ENCODE measurements at regions of chr6 and their contacts with region 1.

Region 1: GRCh38 chr6:31827286-31828079 is at the start of gene HSPA1B:
- DNase-seq: peak; percentile 92
- CTCF ChIP-seq: no peak

Region 2: DNA sequence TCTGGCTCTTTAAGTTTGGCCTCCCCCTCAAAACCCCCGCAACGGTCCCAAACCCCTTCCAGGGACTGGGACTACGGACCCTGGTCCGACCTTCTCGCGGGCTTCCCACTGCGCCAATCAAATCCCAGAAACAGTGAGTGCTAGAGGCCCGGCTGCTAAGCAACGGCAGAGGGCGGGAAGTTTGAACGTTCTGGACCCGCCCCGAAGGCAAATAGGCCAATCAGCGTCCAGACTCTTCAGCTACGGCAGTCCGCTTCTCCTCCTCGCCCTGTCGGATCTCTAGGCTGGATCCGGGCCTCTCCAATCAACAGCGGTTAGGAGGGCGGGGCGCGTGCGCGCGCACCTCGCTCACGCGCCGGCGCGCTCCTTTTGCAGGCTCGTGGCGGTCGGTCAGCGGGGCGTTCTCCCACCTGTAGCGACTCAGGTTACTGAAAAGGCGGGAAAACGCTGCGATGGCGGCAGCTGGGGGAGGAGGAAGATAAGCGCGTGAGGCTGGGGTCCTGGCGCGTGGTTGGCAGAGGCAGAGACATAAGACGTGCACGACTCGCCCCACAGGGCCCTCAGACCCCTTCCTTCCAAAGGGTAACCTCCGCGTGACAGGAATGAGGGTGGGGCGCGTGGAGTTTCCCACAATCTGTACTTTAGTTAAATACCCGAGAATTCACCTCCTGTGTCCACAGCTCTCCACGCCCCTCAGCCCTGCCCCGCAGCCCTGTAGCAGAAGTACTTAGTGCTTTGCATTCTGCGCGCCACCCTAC is 87.7 kb before region 1 on chr6 and contains the start of gene MSH5:
- CTCF ChIA-PET with region 1: interaction called, 3 read pairs
- POLR2A ChIA-PET with region 1: interaction called, 15 read pairs
- DNase-seq: peak; percentile 97
- CTCF ChIP-seq: no peak

Region 3: GRCh38 chr6:31795616-31796298 is 31.7 kb before region 1 on chr6 and contains the start of gene VARS1:
- CTCF ChIA-PET with region 1: interaction called, 7 read pairs
- POLR2A ChIA-PET with region 1: interaction called, 14 read pairs
- DNase-seq: peak; percentile 97
- CTCF ChIP-seq: peak; percentile 86

Region 4: GRCh38 chr6:31815025-31815838 is 12.3 kb before region 1 on chr6 and contains the starts of genes HSPA1A and HSPA1L:
- CTCF ChIA-PET with region 1: interaction called, 6 read pairs
- POLR2A ChIA-PET with region 1: interaction called, 39 read pairs
- DNase-seq: peak; percentile 86
- CTCF ChIP-seq: no peak

Region 5: GRCh38 chr6:31862344-31863227 is 35.1 kb after region 1 on chr6 and contains the start of gene NEU1:
- CTCF ChIA-PET with region 1: interaction called, 3 read pairs
- POLR2A ChIA-PET with region 1: interaction called, 11 read pairs
- DNase-seq: peak; percentile 100
- CTCF ChIP-seq: no peak

Region 6: DNA sequence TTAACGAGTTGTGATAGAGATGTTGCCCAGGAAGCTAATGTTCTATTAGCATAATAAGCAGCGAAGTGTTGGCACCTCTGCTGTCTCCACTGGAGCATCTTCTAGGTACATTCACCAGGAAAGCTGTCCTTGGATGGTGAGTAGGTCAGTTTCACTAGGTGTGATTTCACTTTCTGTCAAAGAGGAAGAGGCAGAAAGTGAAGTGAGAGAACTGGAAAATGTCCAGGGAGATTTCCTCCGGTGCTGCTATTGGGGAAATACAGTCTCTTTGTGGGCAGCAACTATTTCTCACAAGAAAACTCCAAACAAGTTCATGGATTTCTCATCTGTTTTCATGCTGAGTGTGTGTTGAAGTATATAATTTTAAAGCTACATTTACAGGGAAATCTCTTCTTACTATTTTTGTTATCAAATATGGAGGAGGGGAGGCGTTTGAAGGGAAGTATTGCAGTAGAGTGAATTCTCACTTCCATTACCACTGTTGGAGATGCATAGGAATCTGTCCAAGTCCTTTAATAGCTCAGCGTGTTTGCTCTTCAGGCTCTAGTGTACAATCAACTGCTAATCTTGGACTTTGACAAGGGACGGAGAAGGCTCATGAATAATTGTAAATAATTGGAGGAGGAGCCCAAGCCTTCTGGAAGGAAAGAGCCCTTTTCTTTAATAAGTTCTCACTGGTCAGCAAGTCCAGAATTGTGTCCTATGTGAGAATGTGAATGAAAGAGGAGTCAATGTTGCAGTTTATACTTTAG is 560.3 kb after region 1 on chr6:
- CTCF ChIA-PET with region 1: no interaction called
- POLR2A ChIA-PET with region 1: interaction called, 14 read pairs
- DNase-seq: no peak
- CTCF ChIP-seq: no peak

Measured in GM10248 (cell line).